T-cell (primary cell): ENCODE measurements at regions of chr12 and their contacts with region 1.

Region 1: GRCh38 chr12:86015019-86015418 is 140.9 kb downstream of the NTS start:
- DNase-seq: no peak
- ATAC-seq: no peak
- H3K4me3 ChIP-seq: no peak overlapping the region
- H3K4me3 Mint-ChIP-seq: no peak overlapping the region
- H3K27ac ChIP-seq: no peak overlapping the region
- H3K27ac Mint-ChIP-seq: no peak overlapping the region
- H3K4me1 ChIP-seq: no peaks in the 10 kb centered on the region
- H3K4me1 Mint-ChIP-seq: no peaks in the 10 kb centered on the region
- H3K27me3 ChIP-seq: no peaks in the 10 kb centered on the region
- H3K27me3 Mint-ChIP-seq: no peaks in the 10 kb centered on the region

Region 2: GRCh38 chr12:85095501-85095900 is 919.5 kb before region 1 on chr12:
- CTCF ChIA-PET with region 1: no interaction called
- POLR2A ChIA-PET with region 1: interaction called in 1 of 2 experiments, 12 read pairs
- DNase-seq: no peak
- ATAC-seq: no peak
- H3K4me3 ChIP-seq: no peak overlapping the region
- H3K4me3 Mint-ChIP-seq: no peak overlapping the region
- H3K27ac ChIP-seq: no peak overlapping the region
- H3K27ac Mint-ChIP-seq: no peak overlapping the region
- H3K4me1 ChIP-seq: no peaks in the 10 kb centered on the region
- H3K4me1 Mint-ChIP-seq: no peaks in the 10 kb centered on the region
- H3K27me3 ChIP-seq: no peaks in the 10 kb centered on the region
- H3K27me3 Mint-ChIP-seq: no peaks in the 10 kb centered on the region